Panc1 (cell line): ENCODE measurements at regions of chr20 and their contacts with region 1.

Region 1: DNA sequence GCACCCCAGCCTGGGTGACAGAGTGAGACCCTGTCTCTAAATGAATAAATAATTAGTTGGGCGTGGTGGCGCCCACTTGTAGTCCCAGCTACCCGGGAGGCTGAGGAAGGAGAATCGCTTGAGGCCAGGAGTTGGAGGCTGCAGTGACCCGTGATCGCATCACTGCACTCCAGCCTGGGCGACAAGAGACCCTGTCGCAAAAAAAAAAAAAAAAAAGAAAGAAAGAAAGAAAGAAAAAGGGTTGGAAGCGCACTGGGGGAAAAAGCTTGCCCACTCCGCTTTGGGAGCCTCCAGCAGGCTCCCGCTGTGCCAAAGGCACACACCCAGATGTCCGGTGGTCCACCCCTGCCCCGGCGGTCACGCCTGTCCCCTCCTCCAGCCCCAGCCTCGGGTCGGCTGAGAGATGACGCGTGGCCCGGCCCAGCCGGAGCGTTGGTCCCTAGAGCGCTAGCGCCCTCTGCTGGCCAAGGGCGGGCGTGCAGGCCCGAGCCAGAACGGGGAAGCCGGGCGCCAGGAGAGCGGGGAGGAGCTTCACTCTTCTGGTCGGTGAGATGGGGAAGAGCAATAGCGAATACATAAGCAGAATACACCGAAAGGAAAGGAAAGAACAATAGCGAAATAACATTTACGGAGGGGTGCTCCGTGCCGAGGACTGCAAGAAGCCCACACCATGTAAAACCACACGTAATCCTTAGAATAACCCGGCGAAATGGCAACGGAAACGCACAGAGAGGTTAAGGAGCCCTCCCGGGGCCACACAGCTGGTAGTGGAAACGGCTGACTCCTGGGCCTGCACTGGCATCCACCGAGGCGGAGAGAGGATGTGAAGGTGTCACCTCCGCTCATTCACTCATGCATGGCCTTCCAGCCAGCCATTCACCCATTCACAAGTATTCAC is 41.7 kb downstream of the UBE2V1 start:
- DNase-seq: peak; percentile 61
- ATAC-seq: peak; percentile 96
- H3K4me3 ChIP-seq: peak overlapping the region; percentile 33 to 47
- H3K27ac ChIP-seq: peak overlapping the region; percentile 66
- H3K4me1 ChIP-seq: 0 out of 2 replicates have a peak, but pooled peaks cover 6% of the 10 kb centered on the region
- H3K27me3 ChIP-seq: no peaks in the 10 kb centered on the region
- CTCF ChIP-seq: peak; percentile 99

Region 2: GRCh38 chr20:49928401-49929141 is 142.7 kb before region 1 on chr20:
- CTCF ChIA-PET with region 1: no interaction called
- POLR2A ChIA-PET with region 1: no interaction called
- in situ Hi-C with region 1: no loop called
- intact Hi-C with region 1: no loop called
- DNase-seq: peak; percentile 62
- ATAC-seq: peak; percentile 94
- H3K4me3 ChIP-seq: no peak overlapping the region
- H3K27ac ChIP-seq: no peak overlapping the region
- H3K4me1 ChIP-seq: no peaks in the 10 kb centered on the region
- H3K27me3 ChIP-seq: no peaks in the 10 kb centered on the region
- CTCF ChIP-seq: peak; percentile 97

Region 3: DNA sequence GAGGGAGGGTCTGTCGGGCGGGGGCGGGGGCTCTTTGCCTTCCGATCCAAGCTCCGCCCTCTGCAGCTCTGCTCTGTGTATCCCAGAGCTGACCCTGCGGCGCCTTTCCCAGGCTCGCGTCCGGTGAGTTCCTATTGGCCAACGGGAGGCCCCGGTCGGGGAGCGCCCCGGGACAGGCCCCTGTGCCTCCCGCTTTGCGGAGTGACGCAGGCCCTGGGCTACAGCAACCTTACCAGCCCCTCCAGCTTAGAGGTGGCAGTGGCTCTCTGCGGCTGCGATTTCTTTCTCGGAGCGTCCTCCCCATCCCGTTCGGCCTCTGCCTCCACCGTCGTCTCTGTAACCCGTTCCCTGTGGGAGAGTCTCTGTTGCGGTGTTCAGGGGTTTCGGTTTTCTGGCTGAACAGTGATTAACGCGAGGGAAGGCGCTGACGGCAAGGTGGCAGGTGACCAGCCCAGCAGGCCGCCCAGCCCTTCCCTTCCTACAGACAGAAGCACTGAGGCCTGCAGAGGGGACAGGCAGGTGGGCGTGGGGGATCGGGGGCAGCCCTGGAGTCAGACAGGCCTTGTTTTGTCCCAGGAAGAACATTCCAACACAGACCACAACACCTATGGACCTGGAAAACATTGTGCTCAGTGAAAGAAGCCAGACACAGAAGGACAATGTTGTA is 101.2 kb after region 1 on chr20:
- CTCF ChIA-PET with region 1: no interaction called
- POLR2A ChIA-PET with region 1: interaction called, 14 read pairs
- in situ Hi-C with region 1: no loop called
- intact Hi-C with region 1: no loop called
- DNase-seq: no peak
- ATAC-seq: peak; percentile 96
- H3K4me3 ChIP-seq: peak overlapping the region; percentile 49 to 86
- H3K27ac ChIP-seq: peak overlapping the region; percentile 99
- H3K4me1 ChIP-seq: peaks cover 30% of the 10 kb centered on the region
- H3K27me3 ChIP-seq: no peaks in the 10 kb centered on the region
- CTCF ChIP-seq: no peak